Activated CD8-positive, alpha-beta T cell treated with anti-CD3 and anti-CD28 coated beads for 36 hours (primary cell): ENCODE measurements at regions of chr2 and their contacts with region 1.

Region 1: GRCh38 chr2:38535744-38536506 is 66.8 kb downstream of the HNRNPLL start:
- DNase-seq: peak; percentile 87
- ATAC-seq: peak; percentile 96
- H3K4me3 Mint-ChIP-seq: peak overlapping the region; percentile 50
- H3K27ac Mint-ChIP-seq: no peak overlapping the region
- H3K4me1 Mint-ChIP-seq: no peaks in the 10 kb centered on the region
- H3K27me3 Mint-ChIP-seq: peaks cover 3% of the 10 kb centered on the region
- CTCF ChIP-seq: peak; percentile 96

Region 2: DNA sequence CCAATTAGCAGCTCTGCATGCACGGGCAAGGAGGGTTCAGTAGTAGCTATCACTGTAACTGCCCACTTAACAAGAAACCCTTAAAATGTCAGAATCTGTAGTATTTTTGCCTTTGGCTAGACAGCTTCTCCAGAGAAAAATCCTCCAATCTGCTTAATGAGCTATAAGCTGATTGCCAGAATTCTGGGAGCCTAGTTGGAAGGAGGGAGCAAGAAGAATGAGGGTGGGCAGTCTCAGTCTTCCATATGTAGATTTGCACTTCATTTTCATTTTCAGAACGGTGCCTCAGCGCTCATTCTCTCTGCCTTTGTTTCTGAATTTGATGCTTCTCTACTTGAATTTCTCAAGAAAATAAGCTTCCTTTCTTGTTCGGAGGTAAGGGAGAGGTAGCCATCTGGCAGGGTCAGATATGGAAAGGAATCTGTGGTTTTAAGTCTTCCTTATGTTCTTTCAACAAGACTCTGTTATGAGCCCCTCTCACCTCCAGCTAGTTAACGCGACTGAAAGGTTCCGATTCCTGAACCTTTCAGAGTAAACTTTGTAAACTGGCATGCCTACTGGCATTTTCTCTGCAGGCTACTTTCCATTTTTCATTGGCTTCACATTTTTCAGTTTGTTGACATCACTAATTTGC is 13.3 kb after region 1 on chr2:
- CTCF ChIA-PET with region 1: interaction called, 15 read pairs
- POLR2A ChIA-PET with region 1: interaction called, 3 read pairs
- intact Hi-C with region 1: no loop called
- DNase-seq: no peak
- ATAC-seq: no peak
- H3K4me3 Mint-ChIP-seq: no peak overlapping the region
- H3K27ac Mint-ChIP-seq: no peak overlapping the region
- H3K4me1 Mint-ChIP-seq: peaks cover 24% of the 10 kb centered on the region
- H3K27me3 Mint-ChIP-seq: peaks cover 4% of the 10 kb centered on the region
- CTCF ChIP-seq: no peak

Region 3: GRCh38 chr2:38574278-38574677 is 38.4 kb after region 1 on chr2:
- CTCF ChIA-PET with region 1: interaction called, 22 read pairs
- POLR2A ChIA-PET with region 1: no interaction called
- intact Hi-C with region 1: no loop called
- DNase-seq: no peak
- ATAC-seq: no peak
- H3K4me3 Mint-ChIP-seq: no peak overlapping the region
- H3K27ac Mint-ChIP-seq: peak overlapping the region; percentile 12
- H3K4me1 Mint-ChIP-seq: peaks cover 24% of the 10 kb centered on the region
- H3K27me3 Mint-ChIP-seq: no peaks in the 10 kb centered on the region
- CTCF ChIP-seq: no peak

Region 4: GRCh38 chr2:38665854-38666555 is 130.1 kb after region 1 on chr2 and contains the start of gene GALM:
- CTCF ChIA-PET with region 1: no interaction called
- POLR2A ChIA-PET with region 1: no interaction called
- intact Hi-C with region 1: no loop called
- DNase-seq: peak; percentile 74
- ATAC-seq: peak; percentile 37
- H3K4me3 Mint-ChIP-seq: peak within 1 kb of the TSS; percentile 79
- H3K27ac Mint-ChIP-seq: peak within 1 kb of the TSS; percentile 98
- H3K4me1 Mint-ChIP-seq: peaks cover 59% of the 10 kb centered on the region
- H3K27me3 Mint-ChIP-seq: no peaks in the 10 kb centered on the region
- CTCF ChIP-seq: no peak
- total RNA-seq, gene GALM: 38.3 to 40.6 TPM

Region 5: DNA sequence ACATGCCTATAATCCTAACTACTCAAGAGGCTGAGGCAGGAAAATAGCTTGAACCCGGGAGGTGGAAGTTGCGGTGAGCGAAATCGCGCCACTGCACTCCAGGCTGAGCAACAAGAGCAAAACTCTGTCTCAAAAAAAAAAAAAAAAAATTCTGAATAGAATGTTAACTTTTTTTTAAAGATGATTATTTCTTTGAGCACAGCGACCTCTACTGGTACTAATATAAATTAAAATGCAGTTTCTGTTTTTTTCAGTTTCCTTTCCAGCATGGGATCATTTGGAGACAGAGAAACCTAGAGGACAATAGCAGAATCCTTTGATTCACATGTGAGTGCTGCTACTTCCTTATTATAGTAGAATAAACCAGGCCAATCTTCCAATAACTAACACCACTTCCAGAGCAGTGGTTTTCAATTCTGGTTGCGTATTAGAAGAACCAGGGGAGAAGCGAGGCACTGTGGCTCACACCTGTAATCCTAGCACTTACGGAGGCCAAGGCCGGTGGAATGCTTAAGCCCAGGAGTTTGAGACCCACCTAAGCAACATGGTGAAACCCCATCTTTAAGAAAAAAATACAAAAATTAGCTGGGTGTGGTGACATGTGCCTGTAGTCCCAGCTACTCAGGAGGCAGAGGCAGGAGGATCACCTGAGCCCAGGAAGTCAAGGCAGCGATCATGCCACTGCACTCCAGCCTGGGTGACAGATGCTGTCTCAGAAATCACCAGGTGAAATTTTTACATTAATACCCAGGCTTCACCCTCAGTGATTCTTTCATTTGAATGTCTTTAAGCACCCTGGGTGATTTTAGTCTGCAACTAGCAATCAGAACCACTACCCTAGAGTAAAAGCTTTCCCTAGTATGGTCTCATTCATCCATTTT is 205.2 kb after region 1 on chr2:
- CTCF ChIA-PET with region 1: interaction called, 9 read pairs
- POLR2A ChIA-PET with region 1: interaction called, 3 read pairs
- intact Hi-C with region 1: loop called (anchors 5 kb)
- DNase-seq: no peak
- ATAC-seq: no peak
- H3K4me3 Mint-ChIP-seq: no peak overlapping the region
- H3K27ac Mint-ChIP-seq: peak overlapping the region; percentile 28
- H3K4me1 Mint-ChIP-seq: peaks cover 46% of the 10 kb centered on the region
- H3K27me3 Mint-ChIP-seq: no peaks in the 10 kb centered on the region
- CTCF ChIP-seq: peak; percentile 87